PC-3 (cell line): ENCODE measurements at regions of chr11 and their contacts with region 1.

Region 1: DNA sequence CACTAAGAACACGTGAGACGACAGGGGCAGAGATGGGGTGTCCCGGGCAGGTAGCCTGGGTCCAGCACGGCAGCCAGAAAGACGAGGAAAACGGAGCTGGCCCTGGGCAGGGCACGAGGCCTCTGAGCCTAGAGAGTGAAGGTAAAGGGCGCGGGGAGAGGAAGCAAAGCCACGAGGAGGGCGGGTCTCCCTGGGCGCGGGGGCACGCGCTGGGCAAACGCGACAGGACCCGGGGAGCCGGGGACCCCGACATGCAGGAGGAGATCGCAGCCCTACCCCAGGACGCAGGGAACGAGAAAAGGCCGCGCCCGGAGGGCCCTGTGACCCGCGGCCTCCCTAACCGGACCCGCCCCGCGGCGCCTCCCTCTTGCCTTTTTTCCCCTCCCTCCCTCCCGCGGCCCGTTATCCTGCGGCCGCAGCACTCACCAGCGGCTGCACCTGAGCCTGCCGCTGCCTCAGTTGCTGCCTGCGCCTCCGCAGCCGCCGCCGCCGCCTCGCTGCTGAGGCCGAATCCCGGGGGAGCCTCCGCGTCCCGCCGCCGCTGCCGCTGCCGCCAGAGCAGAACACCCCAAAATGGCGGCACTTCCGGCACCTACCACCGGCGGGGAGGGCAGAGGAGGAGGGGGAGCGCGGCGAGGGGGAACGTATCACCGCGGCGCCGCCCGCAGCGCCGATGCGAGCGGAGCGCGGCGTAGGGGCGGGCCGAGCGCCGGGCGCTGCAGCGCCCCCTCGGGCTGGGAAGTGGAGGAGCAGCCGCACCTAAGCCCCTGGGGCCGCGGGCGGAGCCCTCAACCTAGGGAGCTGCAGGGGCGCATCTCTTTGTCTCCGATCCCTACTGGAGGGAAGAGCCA is at the start of gene CELF1:
- DNase-seq: peak; percentile 89
- ATAC-seq: peak; percentile 94
- H3K4me3 ChIP-seq: peak within 1 kb of the TSS; percentile 93
- H3K27ac ChIP-seq: peak within 1 kb of the TSS; percentile 75
- H3K4me1 ChIP-seq: peaks cover 12% of the 10 kb centered on the region
- H3K27me3 ChIP-seq: no peaks in the 10 kb centered on the region
- CTCF ChIP-seq: peak; percentile 73
- total RNA-seq, gene CELF1: 80.1 and 92.7 TPM in 2 replicates

Region 2: GRCh38 chr11:47220401-47220824 is 332.4 kb before region 1 on chr11:
- CTCF ChIA-PET with region 1: no interaction called
- POLR2A ChIA-PET with region 1: interaction called, 27 read pairs
- intact Hi-C with region 1: no loop called
- DNase-seq: peak; percentile 70
- ATAC-seq: peak; percentile 31
- H3K4me3 ChIP-seq: no peak overlapping the region
- H3K27ac ChIP-seq: 0 out of 2 replicates have a peak overlapping the region, but pooled peaks have one; percentile 16
- H3K4me1 ChIP-seq: peaks cover 25% of the 10 kb centered on the region
- H3K27me3 ChIP-seq: no peaks in the 10 kb centered on the region
- CTCF ChIP-seq: no peak

Region 3: DNA sequence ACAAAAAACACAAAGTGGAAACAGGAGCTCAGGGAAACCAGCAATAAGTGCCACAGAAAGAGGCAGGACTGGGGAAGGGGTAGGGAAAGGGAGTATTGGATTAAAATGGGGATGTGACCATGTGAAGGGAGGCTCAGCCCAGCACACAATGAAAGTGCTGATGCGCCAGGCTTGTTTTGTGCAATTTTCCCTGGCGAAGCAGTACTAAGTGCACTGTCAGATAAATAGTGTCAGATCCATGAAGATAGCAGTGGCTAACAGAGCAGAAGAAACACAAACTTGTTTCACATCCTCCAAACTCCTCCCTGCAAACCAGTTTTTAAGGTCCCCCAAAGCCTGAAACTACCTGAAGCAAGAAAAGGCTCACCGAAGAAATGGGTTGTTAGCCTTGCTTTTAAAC is 53.2 kb before region 1 on chr11:
- CTCF ChIA-PET with region 1: no interaction called
- POLR2A ChIA-PET with region 1: interaction called, 10 read pairs
- intact Hi-C with region 1: no loop called
- DNase-seq: no peak
- ATAC-seq: no peak
- H3K4me3 ChIP-seq: no peak overlapping the region
- H3K27ac ChIP-seq: no peak overlapping the region
- H3K4me1 ChIP-seq: no peaks in the 10 kb centered on the region
- H3K27me3 ChIP-seq: no peaks in the 10 kb centered on the region
- CTCF ChIP-seq: no peak

Region 4: GRCh38 chr11:47611348-47611794 is 58.6 kb after region 1 on chr11:
- CTCF ChIA-PET with region 1: no interaction called
- POLR2A ChIA-PET with region 1: no interaction called
- intact Hi-C with region 1: no loop called
- DNase-seq: no peak
- ATAC-seq: no peak
- H3K4me3 ChIP-seq: no peak overlapping the region
- H3K27ac ChIP-seq: no peak overlapping the region
- H3K4me1 ChIP-seq: no peaks in the 10 kb centered on the region
- H3K27me3 ChIP-seq: no peaks in the 10 kb centered on the region
- CTCF ChIP-seq: no peak

Region 5: GRCh38 chr11:47705721-47706120 is 152.9 kb after region 1 on chr11:
- CTCF ChIA-PET with region 1: no interaction called
- POLR2A ChIA-PET with region 1: no interaction called
- intact Hi-C with region 1: no loop called
- DNase-seq: no peak
- ATAC-seq: no peak
- H3K4me3 ChIP-seq: no peak overlapping the region
- H3K27ac ChIP-seq: no peak overlapping the region
- H3K4me1 ChIP-seq: no peaks in the 10 kb centered on the region
- H3K27me3 ChIP-seq: no peaks in the 10 kb centered on the region
- CTCF ChIP-seq: no peak